Activated CD8-positive, alpha-beta T cell treated with anti-CD3 and anti-CD28 coated beads, Interleukin-2, amount 10 ng/mL, durations not matched to agents 7 days and 5 days (primary cell): ENCODE measurements at regions of chr1 and their contacts with region 1.

Region 1: DNA sequence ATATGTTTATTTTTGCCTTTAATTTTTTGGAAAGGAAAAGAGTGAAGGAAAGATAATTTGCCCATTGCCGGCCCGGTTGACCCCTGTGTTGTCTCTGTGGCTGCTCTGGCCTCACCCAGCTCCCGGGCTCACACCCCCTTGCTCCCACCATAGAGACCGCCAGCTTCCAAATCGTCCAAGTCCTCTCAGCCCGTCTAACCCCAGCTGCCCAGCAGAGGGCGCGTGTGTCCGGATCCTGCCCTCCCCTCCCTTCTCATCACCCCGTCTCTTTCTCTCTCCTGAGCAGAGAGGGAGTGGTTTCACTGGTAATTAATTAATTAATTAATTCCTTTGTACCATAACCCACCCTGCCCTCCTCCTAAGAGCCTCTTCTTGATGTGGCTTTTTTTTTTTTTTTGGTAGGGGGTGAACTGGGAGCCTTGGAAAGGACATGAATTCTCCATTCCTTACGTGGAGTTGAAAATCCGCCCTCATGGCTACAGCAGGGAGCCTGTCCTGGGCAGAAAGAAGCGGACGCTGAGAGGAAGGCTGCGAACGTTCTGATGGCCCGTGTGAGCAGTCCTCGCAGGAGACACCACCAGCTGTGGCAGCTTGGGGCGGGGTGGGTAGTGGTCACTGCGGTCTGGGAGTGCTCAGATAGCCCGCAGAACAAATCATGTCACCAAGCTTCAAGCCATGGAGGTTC is 45.9 kb downstream of the KIAA0040 start:
- DNase-seq: peak; percentile 76
- ATAC-seq: peak; percentile 90
- H3K4me3 Mint-ChIP-seq: no peak overlapping the region
- H3K27ac Mint-ChIP-seq: no peak overlapping the region
- H3K4me1 Mint-ChIP-seq: peaks cover 5% of the 10 kb centered on the region
- H3K27me3 Mint-ChIP-seq: peaks cover 21% of the 10 kb centered on the region

Region 2: DNA sequence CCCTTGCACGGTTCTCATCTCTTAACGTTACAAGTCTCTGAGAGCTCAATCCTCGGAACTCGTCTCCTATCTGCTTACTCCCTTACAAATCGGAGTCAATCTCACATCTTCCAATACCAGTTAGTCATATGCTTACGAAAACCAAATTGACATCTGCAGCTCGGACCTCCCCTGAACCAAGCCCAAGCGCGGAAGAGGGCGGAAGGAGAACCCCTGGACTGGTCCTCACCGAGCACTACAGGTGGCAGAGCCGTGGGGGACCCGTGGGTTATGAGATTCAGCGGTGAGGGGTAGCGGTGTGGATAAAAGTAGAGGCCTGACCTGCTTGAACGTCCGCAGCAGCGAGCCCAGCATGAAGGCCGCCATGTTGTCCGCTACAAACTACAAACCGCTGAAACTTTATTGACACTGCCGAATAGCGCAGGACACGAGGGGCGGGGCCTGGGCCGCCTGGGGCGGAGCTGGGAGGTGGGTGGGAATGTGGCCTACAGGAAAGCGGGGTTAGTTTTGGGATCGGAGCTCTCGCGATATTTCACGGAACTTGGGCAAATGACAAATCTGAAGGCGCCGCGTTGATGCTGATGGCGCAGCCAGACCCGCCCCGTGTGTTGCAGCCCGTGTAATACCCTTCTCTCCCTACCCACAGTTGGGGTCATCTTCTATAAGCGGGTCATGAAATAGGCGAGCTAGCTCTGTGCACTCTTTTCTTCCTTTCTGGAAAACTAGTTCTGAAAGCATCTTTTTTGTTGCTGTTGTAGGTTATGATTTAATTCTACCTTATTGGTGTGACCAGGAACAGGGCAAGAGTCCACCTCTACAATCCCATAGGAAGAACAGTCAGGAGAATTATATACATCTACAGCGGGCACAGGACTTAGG is 123.4 kb before region 1 on chr1 and contains the start of gene MRPS14:
- CTCF ChIA-PET with region 1: interaction called, 29 read pairs
- POLR2A ChIA-PET with region 1: no interaction called
- DNase-seq: peak; percentile 99
- ATAC-seq: peak; percentile 93
- H3K4me3 Mint-ChIP-seq: peak within 1 kb of the TSS; percentile 93
- H3K27ac Mint-ChIP-seq: peak within 1 kb of the TSS; percentile 92
- H3K4me1 Mint-ChIP-seq: peaks cover 36% of the 10 kb centered on the region
- H3K27me3 Mint-ChIP-seq: no peaks in the 10 kb centered on the region
- total RNA-seq, gene MRPS14: 30.2 to 33.7 TPM

Region 3: DNA sequence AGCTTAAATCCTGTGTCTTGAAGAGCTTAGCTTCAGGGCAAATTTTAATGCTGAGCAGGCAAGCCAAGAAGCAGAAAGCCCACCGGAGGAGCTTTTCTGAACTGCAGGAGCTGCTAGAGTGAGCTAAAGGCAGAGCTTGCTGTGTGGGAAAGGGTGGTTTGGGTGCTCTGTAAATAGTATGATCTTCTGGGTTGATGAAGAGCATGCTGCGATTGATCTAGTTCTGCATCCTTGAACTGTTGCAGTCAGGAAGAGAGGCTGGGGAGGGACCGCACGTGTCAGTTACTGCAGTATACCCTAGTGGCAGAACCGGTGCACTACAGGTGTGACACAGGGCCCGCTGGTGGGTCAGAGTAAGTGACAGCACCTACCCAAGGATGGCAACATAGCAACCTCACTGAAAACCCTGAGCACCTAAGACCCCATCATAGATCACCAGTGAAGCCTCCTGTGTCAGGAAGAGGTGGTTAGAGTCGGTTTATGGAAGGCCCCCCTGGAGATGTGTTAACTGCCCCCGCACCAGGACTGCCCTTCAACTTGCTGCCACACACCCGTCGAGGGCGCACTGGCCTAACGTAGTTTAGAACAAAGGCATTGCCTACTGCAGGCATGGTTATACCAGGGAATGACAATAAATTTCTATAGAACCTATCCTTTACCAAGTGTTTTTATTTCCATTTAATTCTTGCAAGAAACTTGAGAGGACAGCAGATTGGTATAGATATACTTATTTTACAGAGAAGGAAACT is 191.9 kb after region 1 on chr1:
- CTCF ChIA-PET with region 1: interaction called, 18 read pairs
- POLR2A ChIA-PET with region 1: no interaction called
- DNase-seq: peak; percentile 67
- ATAC-seq: peak; percentile 89
- H3K4me3 Mint-ChIP-seq: no peak overlapping the region
- H3K27ac Mint-ChIP-seq: no peak overlapping the region
- H3K4me1 Mint-ChIP-seq: no peaks in the 10 kb centered on the region
- H3K27me3 Mint-ChIP-seq: peaks cover 28% of the 10 kb centered on the region

Region 4: GRCh38 chr1:175353066-175353465 is 206.4 kb after region 1 on chr1:
- CTCF ChIA-PET with region 1: interaction called, 10 read pairs
- POLR2A ChIA-PET with region 1: no interaction called
- DNase-seq: no peak
- ATAC-seq: no peak
- H3K4me3 Mint-ChIP-seq: no peak overlapping the region
- H3K27ac Mint-ChIP-seq: no peak overlapping the region
- H3K4me1 Mint-ChIP-seq: no peaks in the 10 kb centered on the region
- H3K27me3 Mint-ChIP-seq: peaks cover 16% of the 10 kb centered on the region